ENCODE measurements at regions of chrX and their contacts with region 1.

Region 1: DNA sequence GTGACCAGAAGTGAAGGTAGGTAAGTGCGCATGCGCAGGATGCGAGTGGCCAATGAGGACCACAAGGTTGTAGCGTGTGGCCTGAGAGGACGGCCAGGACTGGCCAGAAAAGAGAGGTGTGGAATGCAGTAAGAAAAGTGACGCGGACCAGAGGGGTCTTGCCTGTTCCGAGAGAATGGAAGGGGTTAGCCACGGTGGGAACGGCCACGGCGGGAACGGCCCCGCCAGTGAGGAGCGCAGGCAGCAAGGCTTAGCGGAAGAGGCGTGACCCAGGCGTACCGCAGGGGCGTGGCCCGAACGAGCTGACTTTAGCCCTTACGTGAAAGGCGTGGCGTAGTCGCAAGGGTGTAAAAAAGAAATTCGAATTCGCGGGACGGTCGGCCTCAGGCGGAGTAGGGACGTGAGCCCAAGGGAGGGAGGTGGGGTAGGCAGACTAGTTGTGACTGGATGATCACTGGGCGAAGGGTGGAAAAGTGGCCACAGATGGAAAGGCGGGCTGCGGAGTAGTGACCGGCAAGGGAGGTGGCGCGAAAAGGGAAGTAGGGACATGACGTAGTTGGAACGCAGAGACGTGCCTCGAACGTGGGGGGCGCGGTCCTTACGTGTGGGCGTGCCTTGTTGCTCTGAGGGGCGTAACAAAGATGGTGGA is 10.4 kb upstream of the CLTRN start:
- DNase-seq: peak; percentile 75 to 96 (median 90)
- ATAC-seq: peak; percentile 86
- H3K4me3 ChIP-seq: peak overlapping the region; percentile 89 to 99
- H3K4me3 Mint-ChIP-seq: no peak overlapping the region
- H3K27ac ChIP-seq: peak overlapping the region; percentile 100
- H3K27ac Mint-ChIP-seq: no peak overlapping the region
- H3K4me1 ChIP-seq: peaks cover 16% of the 10 kb centered on the region
- H3K4me1 Mint-ChIP-seq: peaks cover 27% of the 10 kb centered on the region
- H3K27me3 ChIP-seq: no peaks in the 10 kb centered on the region
- H3K27me3 Mint-ChIP-seq: no peaks in the 10 kb centered on the region
- CTCF ChIP-seq: no peak

Region 2: GRCh38 chrX:15686818-15687685 is 12.1 kb after region 1 on chrX:
- CTCF ChIA-PET with region 1: no interaction called
- POLR2A ChIA-PET with region 1: no interaction called
- intact Hi-C with region 1: loop called in 1 of 2 experiments (anchors 1 kb)
- DNase-seq: peak; percentile 16 to 79 (median 60)
- ATAC-seq: peak; percentile 87
- H3K4me3 ChIP-seq: no peak overlapping the region
- H3K4me3 Mint-ChIP-seq: no peak overlapping the region
- H3K27ac ChIP-seq: no peak overlapping the region
- H3K27ac Mint-ChIP-seq: no peak overlapping the region
- H3K4me1 ChIP-seq: peaks cover 5% of the 10 kb centered on the region
- H3K4me1 Mint-ChIP-seq: peaks cover 7% of the 10 kb centered on the region
- H3K27me3 ChIP-seq: no peaks in the 10 kb centered on the region
- H3K27me3 Mint-ChIP-seq: no peaks in the 10 kb centered on the region
- CTCF ChIP-seq: peak; percentile 45

Region 3: DNA sequence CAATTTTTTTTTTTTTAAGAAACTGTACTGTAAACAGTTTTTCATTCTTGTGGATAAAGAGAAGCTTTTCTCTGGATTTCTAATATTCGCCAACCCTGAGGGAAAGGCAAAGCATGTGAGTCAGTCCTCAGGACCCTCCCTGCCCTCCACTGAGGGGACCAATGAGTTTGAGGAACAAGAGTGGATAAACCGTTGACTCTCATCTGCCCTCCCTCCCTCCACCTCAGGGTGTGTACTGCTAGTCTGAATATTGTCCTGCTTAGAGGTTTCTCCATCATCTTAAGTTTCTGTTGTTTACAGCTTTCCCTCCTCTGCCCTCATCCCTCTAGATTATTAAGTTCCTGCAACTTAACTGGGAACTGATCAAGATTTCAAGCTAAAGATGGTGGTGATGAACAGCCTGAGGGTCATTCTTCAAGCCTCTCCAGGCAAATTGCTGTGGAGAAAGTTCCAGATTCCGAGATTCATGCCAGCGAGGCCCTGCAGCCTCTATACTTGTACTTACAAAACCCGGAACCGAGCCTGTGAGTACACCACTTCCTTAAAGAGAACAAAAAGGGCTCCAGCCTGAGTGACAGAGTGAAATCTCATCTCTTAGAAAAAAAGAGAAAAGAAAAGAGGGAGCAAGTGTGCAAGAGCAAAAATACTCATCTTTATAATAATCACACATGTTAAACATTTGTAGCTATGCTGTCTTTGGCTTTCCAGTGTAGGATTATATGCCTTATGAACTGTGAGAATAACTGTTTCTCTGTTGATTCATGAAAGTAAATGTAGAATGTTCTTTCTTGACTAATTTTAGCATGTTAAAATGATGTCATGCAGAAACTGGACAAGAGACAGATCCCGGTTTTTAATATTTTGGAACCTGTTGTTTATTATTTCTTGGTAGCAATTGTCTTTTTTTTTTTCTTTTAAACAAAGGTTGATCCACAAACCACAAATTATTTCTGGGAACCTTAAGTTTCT is 75.0 kb after region 1 on chrX:
- CTCF ChIA-PET with region 1: no interaction called
- POLR2A ChIA-PET with region 1: interaction called, 3 read pairs
- intact Hi-C with region 1: loop called in 1 of 2 experiments (anchors 1 kb)
- DNase-seq: peak in 6 of 9 experiments; percentile 24 to 68 (median 42)
- ATAC-seq: peak; percentile 59
- H3K4me3 ChIP-seq: peak overlapping the region; percentile 13 to 17
- H3K4me3 Mint-ChIP-seq: peak overlapping the region; percentile 72
- H3K27ac ChIP-seq: peak overlapping the region; percentile 94 to 99
- H3K27ac Mint-ChIP-seq: peak overlapping the region; percentile 97
- H3K4me1 ChIP-seq: peaks cover 59% of the 10 kb centered on the region
- H3K4me1 Mint-ChIP-seq: peaks cover 77% of the 10 kb centered on the region
- H3K27me3 ChIP-seq: no peaks in the 10 kb centered on the region
- H3K27me3 Mint-ChIP-seq: no peaks in the 10 kb centered on the region
- CTCF ChIP-seq: no peak

Region 4: GRCh38 chrX:16719334-16720084 is 1044.5 kb after region 1 on chrX and contains the start of gene SYAP1:
- CTCF ChIA-PET with region 1: no interaction called
- POLR2A ChIA-PET with region 1: no interaction called
- intact Hi-C with region 1: loop called in 1 of 2 experiments (anchors 2 kb)
- DNase-seq: peak; percentile 84 to 99 (median 91)
- ATAC-seq: peak; percentile 84
- H3K4me3 ChIP-seq: peak within 1 kb of the TSS; percentile 61 to 87
- H3K4me3 Mint-ChIP-seq: peak within 1 kb of the TSS; percentile 91
- H3K27ac ChIP-seq: peak within 1 kb of the TSS; percentile 95 to 98
- H3K27ac Mint-ChIP-seq: peak within 1 kb of the TSS; percentile 99
- H3K4me1 ChIP-seq: peaks cover 17% of the 10 kb centered on the region
- H3K4me1 Mint-ChIP-seq: peaks cover 34% of the 10 kb centered on the region
- H3K27me3 ChIP-seq: no peaks in the 10 kb centered on the region
- H3K27me3 Mint-ChIP-seq: no peaks in the 10 kb centered on the region
- CTCF ChIP-seq: no peak
- total RNA-seq, gene SYAP1: 71.1 to 76.5 TPM

Measured in CD8-positive, alpha-beta T cell (primary cell).